ENCODE measurements at regions of chrX and their contacts with region 1.

Region 1: DNA sequence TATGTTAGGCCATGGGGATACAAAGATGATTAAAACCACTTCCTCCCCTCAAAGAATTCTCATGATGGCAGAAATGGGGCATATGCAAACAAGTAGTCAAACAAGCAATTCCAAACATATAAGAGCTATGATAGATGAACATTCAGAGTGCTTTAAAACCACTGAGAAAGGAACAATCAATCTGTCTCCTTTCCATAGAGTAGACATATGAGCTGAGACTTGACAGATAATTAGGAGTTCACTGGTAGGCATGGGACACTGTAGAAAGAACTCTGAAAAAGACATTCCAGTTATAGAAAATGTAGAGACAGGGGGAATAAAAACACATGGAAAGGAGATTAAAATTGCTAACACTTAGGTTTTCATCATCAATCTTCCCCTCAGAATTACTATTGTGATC is 372.8 kb downstream of the KLHL4 start:
- DNase-seq: no peak
- H3K4me3 ChIP-seq: no peak overlapping the region
- H3K27ac ChIP-seq: no peak overlapping the region
- H3K4me1 ChIP-seq: no peaks in the 10 kb centered on the region
- H3K27me3 ChIP-seq: no peaks in the 10 kb centered on the region
- CTCF ChIP-seq: no peak

Region 2: DNA sequence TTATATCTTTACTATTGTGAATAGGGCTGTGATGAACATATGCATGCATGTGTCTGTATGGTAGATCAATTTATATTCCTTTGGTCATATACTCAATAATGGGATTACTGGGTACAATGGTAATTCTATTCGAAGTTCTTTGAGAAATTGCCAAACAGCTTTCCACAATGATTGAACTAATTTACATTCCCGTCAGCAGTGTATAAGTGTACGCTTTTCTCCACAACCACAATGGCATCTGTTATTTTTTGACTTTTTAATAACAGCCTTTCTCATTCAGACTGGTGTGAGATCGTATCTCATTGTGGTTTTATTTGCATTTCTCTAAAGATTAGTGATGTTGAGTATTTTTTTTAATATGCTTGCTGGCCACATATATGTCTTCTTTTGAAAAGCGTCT is 812.2 kb before region 1 on chrX:
- CTCF ChIA-PET with region 1: no interaction called
- POLR2A ChIA-PET with region 1: no interaction called
- intact Hi-C with region 1: no loop called
- DNase-seq: no peak
- H3K4me3 ChIP-seq: no peak overlapping the region
- H3K27ac ChIP-seq: no peak overlapping the region
- H3K4me1 ChIP-seq: no peaks in the 10 kb centered on the region
- H3K27me3 ChIP-seq: no peaks in the 10 kb centered on the region
- CTCF ChIP-seq: no peak

Region 3: DNA sequence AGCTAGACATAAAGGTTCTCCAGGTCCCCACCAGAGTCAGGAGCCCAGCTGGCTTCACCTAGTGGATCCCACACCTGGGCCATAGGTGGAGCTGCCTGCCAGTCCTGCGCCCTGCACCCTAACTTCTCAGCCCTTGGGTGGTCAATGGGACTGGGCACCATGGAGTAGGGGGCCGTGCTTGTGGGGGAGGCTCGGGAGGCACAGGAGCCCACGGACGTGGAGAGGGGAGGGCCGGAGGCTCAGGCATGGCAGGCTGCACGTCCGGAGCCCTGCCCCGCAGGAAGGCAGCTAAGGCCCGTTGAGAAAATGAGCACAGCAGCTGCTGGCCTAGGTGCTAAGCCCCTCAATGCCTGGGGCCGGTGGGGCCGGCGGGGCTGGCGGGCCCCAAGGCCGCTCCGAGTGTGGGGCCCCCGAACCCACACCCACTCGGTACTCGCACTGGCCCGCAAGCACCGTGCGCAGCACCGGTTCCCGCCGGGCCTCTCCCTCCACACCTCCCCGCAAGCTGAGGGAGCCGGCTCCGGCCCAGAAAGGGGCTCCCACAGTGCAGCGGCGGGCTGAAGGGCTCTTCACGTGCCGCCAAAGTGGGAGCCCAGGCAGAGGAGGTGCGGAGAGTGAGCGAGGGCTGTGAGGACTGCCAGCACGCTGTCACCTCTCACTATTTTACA is 81.7 kb before region 1 on chrX:
- CTCF ChIA-PET with region 1: no interaction called
- POLR2A ChIA-PET with region 1: no interaction called
- intact Hi-C with region 1: no loop called
- DNase-seq: no peak
- H3K4me3 ChIP-seq: no peak overlapping the region
- H3K27ac ChIP-seq: no peak overlapping the region
- H3K4me1 ChIP-seq: no peaks in the 10 kb centered on the region; the same call in 1 of the 2 replicates
- H3K27me3 ChIP-seq: no peaks in the 10 kb centered on the region
- CTCF ChIP-seq: no peak

Region 4: GRCh38 chrX:87846956-87847355 is 43.5 kb before region 1 on chrX:
- CTCF ChIA-PET with region 1: no interaction called
- POLR2A ChIA-PET with region 1: no interaction called
- intact Hi-C with region 1: loop called (anchors 2 kb)
- DNase-seq: no peak
- H3K4me3 ChIP-seq: no peak overlapping the region
- H3K27ac ChIP-seq: no peak overlapping the region
- H3K4me1 ChIP-seq: no peaks in the 10 kb centered on the region
- H3K27me3 ChIP-seq: no peaks in the 10 kb centered on the region
- CTCF ChIP-seq: no peak

Region 5: GRCh38 chrX:88355252-88355651 is 464.8 kb after region 1 on chrX:
- CTCF ChIA-PET with region 1: no interaction called
- POLR2A ChIA-PET with region 1: no interaction called
- intact Hi-C with region 1: no loop called
- DNase-seq: no peak
- H3K4me3 ChIP-seq: no peak overlapping the region
- H3K27ac ChIP-seq: no peak overlapping the region
- H3K4me1 ChIP-seq: no peaks in the 10 kb centered on the region
- H3K27me3 ChIP-seq: no peaks in the 10 kb centered on the region
- CTCF ChIP-seq: no peak

Measured in PC-9 (cell line).